ENCODE measurements at regions of chr3 and their contacts with region 1.

Region 1: GRCh38 chr3:195271116-195271858 is at the start of gene XXYLT1:
- DNase-seq: peak; percentile 94
- ATAC-seq: peak; percentile 86
- H3K4me3 Mint-ChIP-seq: peak within 1 kb of the TSS; percentile 83
- H3K27ac Mint-ChIP-seq: peak within 1 kb of the TSS; percentile 86
- H3K4me1 Mint-ChIP-seq: peaks cover 32% of the 10 kb centered on the region
- H3K27me3 Mint-ChIP-seq: no peaks in the 10 kb centered on the region
- total RNA-seq, gene XXYLT1: 10.8 to 13.3 TPM

Region 2: GRCh38 chr3:194861375-194861774 is 409.9 kb before region 1 on chr3:
- CTCF ChIA-PET with region 1: no interaction called
- POLR2A ChIA-PET with region 1: no interaction called
- DNase-seq: no peak
- ATAC-seq: no peak
- H3K4me3 Mint-ChIP-seq: no peak overlapping the region
- H3K27ac Mint-ChIP-seq: no peak overlapping the region
- H3K4me1 Mint-ChIP-seq: no peaks in the 10 kb centered on the region
- H3K27me3 Mint-ChIP-seq: peaks cover 13% of the 10 kb centered on the region

Region 3: DNA sequence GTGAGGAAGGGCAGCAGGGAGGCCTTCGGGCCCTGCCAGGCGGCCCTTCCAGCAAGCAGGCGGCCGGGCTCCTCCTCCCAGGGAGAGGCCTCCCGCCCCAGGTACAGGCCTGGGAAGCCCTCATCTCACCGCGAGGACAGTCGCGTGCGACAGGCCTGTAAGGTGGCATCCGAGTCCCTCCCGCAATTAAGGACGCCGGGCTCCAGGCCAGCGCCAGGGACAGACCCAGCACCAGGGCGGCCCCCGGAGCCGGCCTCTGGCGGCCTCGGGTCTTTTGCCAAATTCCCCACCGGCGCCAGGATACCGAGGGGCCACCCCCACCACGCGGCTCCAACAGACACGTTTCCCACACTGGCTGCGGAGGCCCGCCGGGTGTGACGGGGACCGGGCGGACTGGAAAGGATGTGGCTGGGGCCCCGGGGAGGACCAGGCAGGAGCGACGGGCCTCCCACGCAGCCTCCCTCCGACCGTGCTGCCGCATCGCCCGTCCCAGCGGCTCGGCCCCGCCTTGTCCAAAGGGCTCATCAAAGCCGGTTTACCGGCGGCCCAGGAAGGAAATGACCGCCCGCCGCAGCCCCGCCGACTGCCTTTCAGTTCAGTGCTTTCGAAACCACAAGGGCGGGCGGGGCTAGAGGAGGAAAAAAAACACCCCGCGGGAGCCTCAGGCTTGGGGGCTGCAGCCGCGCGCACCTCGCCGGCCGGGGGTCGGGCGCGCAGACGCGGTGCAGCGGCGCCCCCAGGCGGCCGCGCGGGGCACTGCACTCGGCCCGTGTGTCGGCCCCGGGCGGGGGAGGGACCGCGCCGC is 11.6 kb before region 1 on chr3:
- CTCF ChIA-PET with region 1: interaction called, 56 read pairs
- POLR2A ChIA-PET with region 1: interaction called, 4 read pairs
- DNase-seq: peak; percentile 94
- ATAC-seq: peak; percentile 80
- H3K4me3 Mint-ChIP-seq: peak overlapping the region; percentile 48
- H3K27ac Mint-ChIP-seq: no peak overlapping the region
- H3K4me1 Mint-ChIP-seq: peaks cover 38% of the 10 kb centered on the region
- H3K27me3 Mint-ChIP-seq: no peaks in the 10 kb centered on the region

Region 4: DNA sequence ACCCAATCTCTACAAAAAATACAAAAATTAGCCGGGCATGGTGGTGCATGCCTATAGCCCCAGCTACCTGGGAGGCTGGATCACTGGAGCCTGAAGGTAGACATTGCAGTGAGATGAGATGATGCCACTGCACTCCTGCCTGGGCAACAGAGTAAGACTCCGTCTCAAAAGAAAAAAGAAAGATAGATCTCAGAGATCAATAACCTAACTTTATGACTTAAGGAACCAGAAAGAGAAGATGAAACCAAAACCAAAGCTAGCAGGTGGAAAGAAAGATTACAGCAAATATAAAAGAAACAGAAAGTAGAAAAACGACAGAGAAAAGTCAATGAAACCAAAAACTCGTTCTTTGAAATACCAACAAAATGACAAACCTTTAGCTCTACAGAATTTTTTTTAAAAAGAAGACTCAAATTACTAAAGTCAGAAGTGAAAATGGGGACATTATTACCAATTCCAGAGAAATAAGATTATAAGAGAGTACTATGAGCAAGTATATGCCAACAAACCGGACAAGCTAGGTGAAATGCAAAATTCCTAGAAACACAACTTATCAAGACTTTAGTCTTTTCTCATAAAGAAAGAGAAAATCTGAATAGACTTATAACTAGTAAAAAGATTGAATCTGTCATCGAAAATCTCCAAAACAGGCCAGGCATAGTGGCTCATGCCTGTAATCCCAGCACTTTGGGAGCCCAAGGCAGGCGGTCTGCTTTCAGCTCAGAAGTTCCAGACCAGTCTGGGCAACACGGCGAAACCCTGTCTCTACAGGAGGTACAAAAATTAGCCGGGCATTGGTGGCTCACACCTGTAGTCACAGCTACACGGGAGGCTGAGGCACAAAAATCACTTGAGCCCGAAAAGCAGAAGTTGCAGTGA is 136.5 kb after region 1 on chr3:
- CTCF ChIA-PET with region 1: interaction called, 10 read pairs
- POLR2A ChIA-PET with region 1: no interaction called
- DNase-seq: no peak
- ATAC-seq: peak; percentile 66
- H3K4me3 Mint-ChIP-seq: peak overlapping the region; percentile 59
- H3K27ac Mint-ChIP-seq: peak overlapping the region; percentile 76
- H3K4me1 Mint-ChIP-seq: peaks cover 47% of the 10 kb centered on the region
- H3K27me3 Mint-ChIP-seq: no peaks in the 10 kb centered on the region

Region 5: GRCh38 chr3:195508185-195508584 is 236.9 kb after region 1 on chr3:
- CTCF ChIA-PET with region 1: interaction called, 21 read pairs
- POLR2A ChIA-PET with region 1: interaction called, 3 read pairs
- DNase-seq: no peak
- ATAC-seq: no peak
- H3K4me3 Mint-ChIP-seq: no peak overlapping the region
- H3K27ac Mint-ChIP-seq: no peak overlapping the region
- H3K4me1 Mint-ChIP-seq: peaks cover 8% of the 10 kb centered on the region
- H3K27me3 Mint-ChIP-seq: no peaks in the 10 kb centered on the region

Region 6: DNA sequence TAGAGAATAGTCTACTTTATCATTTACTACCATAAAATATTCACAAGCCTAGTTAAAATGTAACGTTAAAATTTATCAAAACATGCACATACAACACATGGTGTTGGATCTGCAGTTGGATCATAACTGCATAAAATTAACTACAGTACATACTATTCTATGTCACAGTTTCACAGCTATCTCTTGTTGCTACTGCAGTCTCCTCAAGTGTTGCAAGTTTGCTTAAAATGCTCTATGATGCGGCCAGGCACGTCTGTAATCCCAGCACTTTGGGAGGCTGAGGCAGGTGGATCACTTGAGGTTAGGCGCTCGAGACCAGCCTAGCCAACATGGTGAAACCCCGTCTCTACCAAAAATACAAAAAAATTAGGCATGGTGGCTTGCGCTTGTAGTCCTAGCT is 261.5 kb after region 1 on chr3:
- CTCF ChIA-PET with region 1: interaction called, 258 read pairs
- POLR2A ChIA-PET with region 1: no interaction called
- DNase-seq: no peak
- ATAC-seq: no peak
- H3K4me3 Mint-ChIP-seq: no peak overlapping the region
- H3K27ac Mint-ChIP-seq: no peak overlapping the region
- H3K4me1 Mint-ChIP-seq: peaks cover 53% of the 10 kb centered on the region
- H3K27me3 Mint-ChIP-seq: no peaks in the 10 kb centered on the region

Region 7: DNA sequence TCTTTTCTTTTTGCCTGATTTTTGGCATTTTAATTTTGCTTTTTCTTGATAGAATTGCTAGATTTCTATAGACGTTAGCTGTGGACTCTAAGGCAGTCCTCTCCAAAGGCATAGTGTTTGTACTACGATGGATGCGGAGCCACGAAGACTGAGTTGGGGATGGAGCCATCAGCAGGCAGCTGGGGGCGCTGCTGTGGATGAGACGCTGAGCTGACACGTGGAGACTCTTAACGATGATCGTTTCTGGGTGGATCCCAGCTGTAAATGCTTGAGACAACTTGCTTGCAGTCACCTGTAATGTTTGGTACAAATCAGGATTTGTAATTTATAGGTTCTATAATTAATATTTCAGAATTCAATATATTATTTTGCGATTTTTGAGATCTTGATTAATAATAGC is 285.1 kb after region 1 on chr3:
- CTCF ChIA-PET with region 1: interaction called, 29 read pairs
- POLR2A ChIA-PET with region 1: no interaction called
- DNase-seq: no peak
- ATAC-seq: no peak
- H3K4me3 Mint-ChIP-seq: no peak overlapping the region
- H3K27ac Mint-ChIP-seq: no peak overlapping the region
- H3K4me1 Mint-ChIP-seq: peaks cover 46% of the 10 kb centered on the region
- H3K27me3 Mint-ChIP-seq: no peaks in the 10 kb centered on the region

Measured in activated CD8-positive, alpha-beta T cell treated with anti-CD3 and anti-CD28 coated beads, Interleukin-2, amount 10 ng/mL, durations not matched to agents 7 days and 5 days (primary cell).